CD4-positive, alpha-beta memory T cell (primary cell): ENCODE measurements at regions of chr2 and their contacts with region 1.

Region 1: DNA sequence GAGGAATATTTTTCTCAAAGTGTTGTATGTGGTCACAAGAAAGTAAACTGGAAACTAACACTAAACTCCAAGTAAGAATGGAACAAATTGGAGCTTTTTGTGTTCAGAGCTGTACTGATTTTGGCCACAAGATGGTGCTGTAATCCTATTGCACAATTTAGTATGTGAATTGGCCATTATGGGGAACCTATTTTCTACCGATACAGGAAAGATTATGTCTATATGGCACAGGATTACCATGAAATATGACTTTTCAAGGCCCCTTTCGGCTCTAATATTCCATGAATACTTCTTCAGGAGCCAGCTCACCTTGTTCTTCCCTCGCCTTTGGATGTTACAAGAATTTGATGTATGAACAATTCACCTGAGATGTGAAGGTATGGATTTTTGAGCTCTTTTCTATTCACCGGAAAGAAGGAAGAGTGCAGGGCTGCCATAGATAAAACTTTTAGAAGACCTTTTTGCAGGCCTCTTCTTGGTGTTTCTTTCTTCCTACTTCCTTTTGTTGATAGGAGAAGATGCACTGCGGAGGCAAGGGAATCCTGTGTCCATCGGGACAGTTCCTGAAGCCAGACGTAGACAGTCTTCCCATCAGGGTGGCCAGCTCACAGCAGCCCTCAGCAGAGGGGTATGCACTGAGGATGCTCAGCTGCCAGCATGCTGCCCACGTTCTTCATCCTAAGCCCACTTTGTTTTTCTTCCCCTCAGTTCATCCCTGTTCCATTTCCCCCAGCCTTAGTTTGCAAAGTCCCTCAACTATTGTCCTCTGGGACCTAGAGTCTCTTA is 13.3 kb downstream of the MRPL44 start:
- DNase-seq: peak; percentile 44 to 54 (median 54)
- H3K4me3 ChIP-seq: no peak overlapping the region
- H3K4me3 Mint-ChIP-seq: no peak overlapping the region
- H3K27ac ChIP-seq: no peak overlapping the region
- H3K27ac Mint-ChIP-seq: peak overlapping the region in 2 of 7 donors; percentile 18 to 30
- H3K4me1 ChIP-seq: peaks cover 6% of the 10 kb centered on the region
- H3K4me1 Mint-ChIP-seq: peaks cover 2 to 8% (median 5%) of the 10 kb centered on the region in 4 donors
- H3K27me3 ChIP-seq: no peaks in the 10 kb centered on the region
- H3K27me3 Mint-ChIP-seq: no peaks in the 10 kb centered on the region

Region 2: DNA sequence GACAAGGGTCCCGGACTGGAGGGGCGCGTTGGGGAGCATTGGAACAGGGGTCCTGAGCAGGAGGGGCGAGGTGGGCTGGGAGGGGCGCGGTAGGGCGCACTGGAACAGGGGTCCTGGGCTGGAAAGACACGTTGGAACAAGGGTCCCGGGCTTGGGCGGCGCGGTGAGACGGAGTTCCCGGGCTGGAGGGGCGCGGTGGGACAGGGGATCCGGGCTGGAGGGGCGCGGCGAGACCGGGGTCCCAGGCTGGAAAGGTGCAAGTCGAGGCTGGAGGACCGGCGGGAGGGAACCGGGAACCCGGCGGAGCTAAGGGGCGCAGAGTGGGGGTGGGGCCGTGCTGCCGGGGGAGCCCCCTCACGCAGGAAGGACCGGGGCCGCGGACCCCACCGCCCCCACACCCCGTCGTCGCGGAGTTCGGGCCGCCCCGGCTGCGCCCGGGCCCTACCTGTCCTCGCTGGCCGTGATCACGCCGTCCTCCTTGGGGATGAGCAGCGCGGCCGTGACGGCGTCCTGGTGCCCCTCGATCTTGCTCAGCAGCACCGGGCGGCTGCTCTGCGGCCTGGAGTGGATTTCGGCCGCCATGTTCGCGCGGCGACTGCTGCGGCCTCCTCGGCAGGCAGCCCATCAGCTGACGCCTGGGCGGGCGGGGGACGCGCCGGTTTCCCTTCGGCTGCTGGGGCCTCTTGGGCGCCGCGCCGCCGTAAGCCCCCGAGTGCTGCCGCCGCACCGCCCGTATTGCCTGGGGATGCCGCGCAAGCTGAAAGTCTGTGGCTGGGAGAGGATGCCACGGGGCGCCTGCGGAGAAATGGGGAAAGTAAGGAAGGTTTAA is 25.6 kb before region 1 on chr2 and contains the start of gene WDFY1:
- CTCF ChIA-PET with region 1: interaction called, 10 read pairs
- POLR2A ChIA-PET with region 1: no interaction called
- intact Hi-C with region 1: no loop called
- DNase-seq: peak; percentile 71 to 79 (median 74)
- H3K4me3 ChIP-seq: peak within 1 kb of the TSS; percentile 20 to 87
- H3K4me3 Mint-ChIP-seq: peak within 1 kb of the TSS; percentile 90 to 95 (median 92)
- H3K27ac ChIP-seq: peak within 1 kb of the TSS; percentile 50
- H3K27ac Mint-ChIP-seq: peak within 1 kb of the TSS; percentile 84 to 95 (median 92)
- H3K4me1 ChIP-seq: peaks cover 46% of the 10 kb centered on the region
- H3K4me1 Mint-ChIP-seq: peaks cover 37 to 70% (median 53%) of the 10 kb centered on the region in 4 donors
- H3K27me3 ChIP-seq: no peaks in the 10 kb centered on the region
- H3K27me3 Mint-ChIP-seq: no peaks in the 10 kb centered on the region
- total RNA-seq, gene WDFY1: 31.5 to 37.7 TPM

Region 3: GRCh38 chr2:224208007-224208406 is 237.5 kb after region 1 on chr2:
- CTCF ChIA-PET with region 1: no interaction called
- POLR2A ChIA-PET with region 1: no interaction called
- intact Hi-C with region 1: no loop called
- DNase-seq: no peak
- H3K4me3 ChIP-seq: no peak overlapping the region
- H3K4me3 Mint-ChIP-seq: no peak overlapping the region
- H3K27ac ChIP-seq: no peak overlapping the region
- H3K27ac Mint-ChIP-seq: no peak overlapping the region
- H3K4me1 ChIP-seq: no peaks in the 10 kb centered on the region
- H3K4me1 Mint-ChIP-seq: no peaks in the 10 kb centered on the region
- H3K27me3 ChIP-seq: no peaks in the 10 kb centered on the region
- H3K27me3 Mint-ChIP-seq: peaks cover 8 to 9% of the 10 kb centered on the region in 2 donors

Region 4: DNA sequence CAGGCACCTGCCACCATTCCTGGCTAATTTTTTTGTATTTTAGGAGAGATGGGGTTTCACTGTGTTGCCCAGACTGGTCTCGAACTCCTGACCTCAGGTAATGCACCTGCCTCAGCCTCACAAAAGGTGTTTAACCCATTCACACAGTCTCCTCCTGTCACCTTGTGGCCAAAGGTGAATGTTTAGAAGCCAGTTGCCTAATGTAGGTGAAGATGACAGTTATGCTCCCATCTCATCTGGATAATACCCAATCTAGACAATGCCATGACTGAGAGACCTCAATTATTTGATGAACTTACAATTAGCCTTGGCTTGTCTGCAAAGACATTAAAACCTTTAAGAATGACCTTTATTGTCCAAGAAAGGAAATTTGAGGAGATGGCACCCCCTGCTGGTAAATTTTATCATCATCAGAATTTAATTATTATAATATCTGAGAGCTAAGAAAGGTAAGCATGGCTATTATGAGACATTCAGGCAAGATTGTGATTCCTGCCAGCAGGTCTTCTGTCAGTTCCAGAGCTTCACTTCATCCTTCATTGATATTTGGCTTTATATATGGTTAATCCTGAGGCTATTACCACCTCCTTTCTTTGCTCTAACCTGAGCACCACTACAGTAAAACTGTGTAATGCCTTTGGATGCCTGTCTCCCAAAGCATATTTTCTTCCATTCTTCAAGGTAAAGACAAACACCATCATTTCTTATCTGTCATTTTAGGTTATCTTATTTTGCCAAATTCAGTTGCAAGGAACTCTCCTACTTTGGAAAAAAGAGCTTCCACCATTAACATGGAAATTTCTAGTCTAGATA is 313.8 kb after region 1 on chr2:
- CTCF ChIA-PET with region 1: interaction called, 72 read pairs
- POLR2A ChIA-PET with region 1: interaction called, 4 read pairs
- intact Hi-C with region 1: loop called (anchors 1 kb)
- DNase-seq: peak in 4 of 5 donors; percentile 30 to 44 (median 33)
- H3K4me3 ChIP-seq: no peak overlapping the region
- H3K4me3 Mint-ChIP-seq: no peak overlapping the region
- H3K27ac ChIP-seq: no peak overlapping the region
- H3K27ac Mint-ChIP-seq: no peak overlapping the region
- H3K4me1 ChIP-seq: no peaks in the 10 kb centered on the region
- H3K4me1 Mint-ChIP-seq: no peaks in the 10 kb centered on the region
- H3K27me3 ChIP-seq: no peaks in the 10 kb centered on the region
- H3K27me3 Mint-ChIP-seq: peaks cover 26 to 31% of the 10 kb centered on the region in 2 donors

Region 5: GRCh38 chr2:224369028-224369632 is 398.6 kb after region 1 on chr2:
- CTCF ChIA-PET with region 1: interaction called, 13 read pairs
- POLR2A ChIA-PET with region 1: interaction called, 3 read pairs
- intact Hi-C with region 1: no loop called
- DNase-seq: peak in 4 of 5 donors; percentile 15 to 32 (median 26)
- H3K4me3 ChIP-seq: no peak overlapping the region
- H3K4me3 Mint-ChIP-seq: no peak overlapping the region
- H3K27ac ChIP-seq: no peak overlapping the region
- H3K27ac Mint-ChIP-seq: no peak overlapping the region
- H3K4me1 ChIP-seq: no peaks in the 10 kb centered on the region
- H3K4me1 Mint-ChIP-seq: no peaks in the 10 kb centered on the region
- H3K27me3 ChIP-seq: no peaks in the 10 kb centered on the region
- H3K27me3 Mint-ChIP-seq: peaks cover 2 to 3% of the 10 kb centered on the region in 2 donors

Region 6: DNA sequence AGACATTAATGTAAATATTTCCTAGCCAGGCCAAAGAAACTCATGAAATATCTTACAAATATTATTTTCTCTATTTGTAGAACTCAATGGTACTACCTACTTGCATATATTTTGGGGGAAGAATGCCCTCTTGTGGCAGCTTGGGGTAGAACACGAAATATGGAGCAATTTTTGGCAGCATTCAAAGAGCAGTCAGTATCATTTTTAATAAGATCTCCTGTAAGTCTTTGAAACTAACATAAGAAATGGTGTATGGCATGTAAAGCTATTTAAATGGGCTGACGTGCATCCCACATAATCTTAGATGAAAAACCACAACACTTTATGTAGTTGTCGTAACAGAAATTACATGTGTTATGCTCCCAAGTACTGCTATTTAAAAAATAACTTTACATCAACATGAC is 807.9 kb after region 1 on chr2:
- CTCF ChIA-PET with region 1: no interaction called
- POLR2A ChIA-PET with region 1: no interaction called
- intact Hi-C with region 1: loop called (anchors 2 kb)
- DNase-seq: peak; percentile 46 to 58 (median 54)
- H3K4me3 ChIP-seq: no peak overlapping the region
- H3K4me3 Mint-ChIP-seq: no peak overlapping the region
- H3K27ac ChIP-seq: no peak overlapping the region
- H3K27ac Mint-ChIP-seq: peak overlapping the region in 3 of 7 donors; percentile 0 to 65 (median 25)
- H3K4me1 ChIP-seq: no peaks in the 10 kb centered on the region
- H3K4me1 Mint-ChIP-seq: peaks cover 0 to 5% (median 0%) of the 10 kb centered on the region in 4 donors
- H3K27me3 ChIP-seq: no peaks in the 10 kb centered on the region
- H3K27me3 Mint-ChIP-seq: no peaks in the 10 kb centered on the region